PC-3 (cell line): ENCODE measurements at regions of chr11 and their contacts with region 1.

Region 1: GRCh38 chr11:83051760-83052671 is 19.7 kb downstream of the RAB30 start:
- DNase-seq: peak; percentile 97
- ATAC-seq: peak; percentile 81
- H3K4me3 ChIP-seq: peak overlapping the region; percentile 34
- H3K27ac ChIP-seq: peak overlapping the region; percentile 91
- H3K4me1 ChIP-seq: peaks cover 71% of the 10 kb centered on the region
- H3K27me3 ChIP-seq: no peaks in the 10 kb centered on the region
- CTCF ChIP-seq: no peak

Region 2: DNA sequence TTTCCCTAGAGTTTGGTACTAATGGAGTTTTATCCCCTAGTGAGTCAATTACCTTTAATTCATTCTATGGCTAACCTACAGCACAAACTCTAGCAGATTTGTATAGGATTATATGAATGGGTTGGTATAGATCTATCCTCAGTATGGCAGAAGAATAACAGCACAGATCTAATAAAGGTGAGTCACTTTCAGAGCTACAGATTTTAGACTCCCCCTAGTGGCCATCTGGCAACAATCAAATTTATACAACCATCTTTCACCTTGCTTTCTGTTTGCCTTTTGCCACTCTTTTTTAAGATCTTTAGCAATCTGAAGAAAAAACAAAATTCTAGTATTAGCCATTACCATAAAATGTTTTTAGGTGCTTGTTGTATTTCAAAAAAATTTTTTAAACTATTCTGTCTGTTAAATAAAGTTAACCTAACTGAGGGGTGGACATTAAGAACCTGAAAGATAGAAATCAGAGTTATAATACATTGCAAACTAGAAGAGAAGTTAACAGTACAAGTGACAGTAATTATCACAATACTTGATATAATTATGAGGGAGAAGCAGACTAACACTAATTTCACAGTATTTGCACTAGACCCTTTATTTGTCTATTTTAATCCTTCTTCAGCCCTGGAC is 124.6 kb before region 1 on chr11:
- CTCF ChIA-PET with region 1: interaction called, 3 read pairs
- POLR2A ChIA-PET with region 1: no interaction called
- intact Hi-C with region 1: loop called (anchors 1 kb)
- DNase-seq: peak; percentile 80
- ATAC-seq: peak; percentile 89
- H3K4me3 ChIP-seq: no peak overlapping the region
- H3K27ac ChIP-seq: no peak overlapping the region
- H3K4me1 ChIP-seq: no peaks in the 10 kb centered on the region
- H3K27me3 ChIP-seq: no peaks in the 10 kb centered on the region
- CTCF ChIP-seq: peak; percentile 94

Region 3: DNA sequence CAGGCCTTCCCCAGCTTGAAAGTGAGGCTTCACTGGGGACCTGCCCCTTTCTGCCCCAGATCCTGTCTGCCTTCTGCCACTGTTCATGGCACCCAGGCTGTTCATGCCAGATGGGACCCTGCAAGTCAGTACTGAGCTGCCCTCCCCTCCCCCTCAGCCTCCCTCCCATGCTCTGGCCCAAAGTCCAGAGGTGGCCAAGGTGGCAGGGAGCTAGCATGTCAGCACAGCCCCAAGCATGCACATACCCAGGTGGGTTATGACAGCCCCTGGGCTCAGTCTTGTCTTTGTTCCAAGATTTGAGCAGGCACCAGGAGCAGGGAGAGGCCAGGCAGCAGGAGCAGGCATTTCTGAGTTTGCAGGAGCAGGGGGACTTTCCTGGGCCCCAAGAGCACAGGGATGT is 106.3 kb before region 1 on chr11:
- CTCF ChIA-PET with region 1: no interaction called
- POLR2A ChIA-PET with region 1: no interaction called
- intact Hi-C with region 1: no loop called
- DNase-seq: no peak
- ATAC-seq: no peak
- H3K4me3 ChIP-seq: no peak overlapping the region
- H3K27ac ChIP-seq: no peak overlapping the region
- H3K4me1 ChIP-seq: no peaks in the 10 kb centered on the region
- H3K27me3 ChIP-seq: no peaks in the 10 kb centered on the region
- CTCF ChIP-seq: no peak

Region 4: DNA sequence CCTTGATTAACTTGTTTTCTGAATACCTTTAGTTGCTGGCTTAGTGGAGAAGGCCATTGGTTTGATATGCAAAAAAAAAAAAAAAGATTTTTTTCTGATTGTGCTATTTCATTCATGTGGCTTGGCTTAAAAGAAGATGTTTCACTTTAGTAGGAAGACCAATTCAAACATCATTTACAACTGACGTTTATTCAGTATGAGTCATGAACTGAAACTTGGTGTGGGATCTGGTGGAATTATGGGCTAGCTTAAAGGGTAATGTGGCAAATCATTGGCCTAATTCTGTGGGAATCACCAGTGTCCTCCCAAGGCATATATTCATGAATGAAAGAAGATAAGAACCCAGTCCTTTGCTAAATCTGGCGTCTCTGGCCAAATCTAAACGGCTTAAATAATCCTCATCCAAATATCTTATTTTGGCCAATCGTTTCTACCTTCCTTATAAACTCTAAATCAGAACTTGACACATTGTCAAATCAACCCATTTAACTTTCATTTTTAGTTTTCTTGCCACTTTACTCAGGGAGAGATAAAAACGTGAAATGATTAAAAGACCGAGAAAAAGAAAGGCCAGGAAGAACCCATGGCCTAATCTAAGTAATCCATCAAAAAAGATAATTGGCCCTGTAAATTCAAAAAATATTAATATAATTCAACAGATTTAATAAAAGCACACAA is 73.5 kb before region 1 on chr11:
- CTCF ChIA-PET with region 1: no interaction called
- POLR2A ChIA-PET with region 1: no interaction called
- intact Hi-C with region 1: loop called (anchors 5 kb)
- DNase-seq: peak; percentile 92
- ATAC-seq: peak; percentile 64
- H3K4me3 ChIP-seq: no peak overlapping the region
- H3K27ac ChIP-seq: peak overlapping the region; percentile 80
- H3K4me1 ChIP-seq: peaks cover 56% of the 10 kb centered on the region
- H3K27me3 ChIP-seq: no peaks in the 10 kb centered on the region
- CTCF ChIP-seq: no peak

Region 5: DNA sequence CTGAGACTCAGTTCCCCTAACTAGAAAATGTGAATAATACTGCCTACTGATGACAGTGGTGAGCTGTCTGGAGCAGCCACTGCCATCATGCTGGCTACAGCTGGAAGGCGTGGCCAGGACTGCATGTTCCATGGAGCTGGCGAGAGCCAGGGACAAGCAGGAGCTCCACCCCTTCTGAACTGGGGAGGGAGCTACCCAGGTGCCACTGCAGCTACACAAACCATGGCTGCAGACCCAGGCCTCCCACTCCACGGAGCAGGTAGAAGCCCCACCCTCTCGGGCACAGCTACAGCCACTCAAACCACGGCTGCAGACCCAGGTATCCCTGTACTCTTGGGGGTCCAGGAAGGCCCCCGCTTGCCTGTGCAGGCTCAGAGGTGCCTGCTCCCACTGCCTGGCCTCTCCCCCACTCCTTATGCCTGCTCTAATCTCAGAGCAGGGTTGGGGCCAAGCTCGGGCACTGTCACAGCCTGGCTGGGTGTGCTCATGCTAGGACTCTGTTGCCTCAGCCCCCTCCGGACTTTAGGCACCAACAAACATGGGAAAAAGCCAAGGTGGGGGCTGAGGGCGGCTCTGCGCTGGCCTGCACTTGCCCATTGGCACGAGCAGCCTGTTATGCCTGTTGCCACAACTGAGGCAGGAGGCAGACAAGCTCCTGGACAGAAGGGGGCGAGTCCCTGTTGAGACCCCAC is 32.0 kb before region 1 on chr11:
- CTCF ChIA-PET with region 1: no interaction called
- POLR2A ChIA-PET with region 1: no interaction called
- intact Hi-C with region 1: no loop called
- DNase-seq: no peak
- ATAC-seq: no peak
- H3K4me3 ChIP-seq: no peak overlapping the region
- H3K27ac ChIP-seq: no peak overlapping the region
- H3K4me1 ChIP-seq: peaks cover 10% of the 10 kb centered on the region
- H3K27me3 ChIP-seq: no peaks in the 10 kb centered on the region
- CTCF ChIP-seq: no peak

Region 6: GRCh38 chr11:83097429-83098075 is 45.5 kb after region 1 on chr11:
- CTCF ChIA-PET with region 1: no interaction called
- POLR2A ChIA-PET with region 1: no interaction called
- intact Hi-C with region 1: no loop called
- DNase-seq: no peak
- ATAC-seq: no peak
- H3K4me3 ChIP-seq: no peak overlapping the region
- H3K27ac ChIP-seq: no peak overlapping the region
- H3K4me1 ChIP-seq: peaks cover 11% of the 10 kb centered on the region
- H3K27me3 ChIP-seq: no peaks in the 10 kb centered on the region
- CTCF ChIP-seq: no peak

Region 7: GRCh38 chr11:83456075-83456474 is 404.1 kb after region 1 on chr11:
- CTCF ChIA-PET with region 1: no interaction called
- POLR2A ChIA-PET with region 1: no interaction called
- intact Hi-C with region 1: no loop called
- DNase-seq: no peak
- ATAC-seq: no peak
- H3K4me3 ChIP-seq: no peak overlapping the region
- H3K27ac ChIP-seq: no peak overlapping the region
- H3K4me1 ChIP-seq: no peaks in the 10 kb centered on the region
- H3K27me3 ChIP-seq: peaks cover 58% of the 10 kb centered on the region
- CTCF ChIP-seq: no peak